Calu3 (cell line): ENCODE measurements at regions of chr4 and their contacts with region 1.

Region 1: DNA sequence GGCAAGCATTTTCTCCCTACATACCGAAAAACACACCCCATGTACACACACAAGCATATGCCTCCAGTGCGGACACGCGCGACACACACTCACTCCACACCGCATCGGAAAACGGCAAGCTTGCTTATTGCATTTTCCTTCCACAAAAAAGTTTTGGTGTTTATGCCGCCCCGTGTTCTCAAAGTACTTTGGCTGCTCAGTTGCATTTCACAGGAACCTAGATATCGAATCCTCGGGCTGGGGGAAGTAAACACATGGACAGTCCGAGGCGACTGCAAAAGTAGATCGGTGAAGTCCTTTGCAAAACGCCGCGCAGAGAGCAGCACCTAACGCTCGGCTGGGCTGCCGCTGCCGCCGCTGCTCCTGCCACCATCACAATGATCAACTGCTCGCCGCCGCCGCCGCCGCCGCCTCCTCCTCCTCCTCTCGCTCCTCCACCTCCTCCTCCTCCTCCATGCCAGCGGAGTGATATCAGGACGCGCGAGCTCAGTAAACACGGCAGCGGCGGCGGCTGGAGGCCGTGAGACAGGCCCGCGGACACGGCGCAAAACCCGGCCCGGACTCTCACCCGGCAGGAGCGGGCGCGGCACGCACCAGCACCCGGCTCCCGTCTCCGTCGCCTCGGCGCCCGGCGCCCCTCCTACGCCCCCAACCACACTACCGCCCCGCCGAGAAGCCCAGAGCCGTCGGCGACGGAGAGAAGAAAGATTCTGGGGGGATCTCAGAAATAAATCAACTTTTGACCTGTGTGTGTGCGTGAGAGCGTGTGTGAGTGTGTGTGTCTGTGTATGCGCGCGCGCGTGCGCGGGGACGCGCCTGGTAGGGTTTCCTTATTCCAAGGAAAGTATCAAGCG is at the start of gene MAML3:
- DNase-seq: peak; percentile 90
- H3K4me3 Mint-ChIP-seq: peak within 1 kb of the TSS; percentile 90
- H3K27ac Mint-ChIP-seq: peak within 1 kb of the TSS; percentile 73
- H3K4me1 Mint-ChIP-seq: no peaks in the 10 kb centered on the region
- H3K27me3 Mint-ChIP-seq: no peaks in the 10 kb centered on the region
- CTCF ChIP-seq: no peak
- total RNA-seq, gene MAML3: 3.8 and 4.0 TPM in 2 replicates

Region 2: DNA sequence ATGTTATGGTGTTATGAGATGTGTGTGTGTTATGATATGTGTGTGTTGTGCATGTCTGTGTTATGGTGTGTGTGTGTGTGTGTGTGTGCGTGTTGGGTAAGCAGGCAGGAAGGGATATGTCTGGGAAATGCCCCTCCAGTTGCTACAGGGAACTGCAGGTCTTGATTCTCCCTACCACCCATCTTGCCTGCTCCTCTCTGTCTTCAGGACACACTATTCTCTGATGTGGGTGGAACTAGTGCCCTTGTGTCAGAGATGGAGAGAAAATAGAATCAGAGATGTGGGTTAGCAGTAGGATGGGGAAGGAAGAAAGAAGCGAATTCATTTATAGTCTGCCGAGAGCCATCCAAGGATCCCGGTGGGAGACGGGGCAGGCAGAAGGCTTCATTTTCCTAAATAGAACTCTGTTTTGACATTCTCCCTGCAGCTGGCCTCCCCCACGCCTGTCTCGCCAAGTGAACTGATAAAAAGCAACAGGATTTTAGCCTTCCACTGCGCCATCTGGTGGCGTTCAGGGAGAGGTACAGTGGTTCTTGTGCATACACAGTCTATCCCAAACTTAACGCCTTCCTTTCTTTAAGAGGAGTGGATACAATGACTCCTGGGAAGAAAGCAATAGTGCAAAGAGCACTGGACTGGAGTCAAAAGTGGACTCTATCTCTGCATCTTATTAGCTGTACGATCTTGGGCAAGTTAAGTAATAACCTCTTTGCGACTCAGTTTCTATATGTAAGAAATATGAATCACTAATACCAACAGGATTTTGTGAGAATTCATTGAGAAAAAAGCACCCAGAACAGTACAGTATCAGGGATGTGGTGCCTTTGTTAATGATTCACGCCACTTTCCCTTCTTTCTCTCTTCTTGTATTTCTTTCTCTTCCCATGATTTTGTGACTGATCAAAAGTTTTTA is 502.4 kb before region 1 on chr4:
- CTCF ChIA-PET with region 1: no interaction called
- intact Hi-C with region 1: no loop called
- DNase-seq: peak; percentile 56
- H3K4me3 Mint-ChIP-seq: no peak overlapping the region
- H3K27ac Mint-ChIP-seq: no peak overlapping the region
- H3K4me1 Mint-ChIP-seq: peaks cover 35% of the 10 kb centered on the region
- H3K27me3 Mint-ChIP-seq: no peaks in the 10 kb centered on the region
- CTCF ChIP-seq: peak; percentile 68

Region 3: DNA sequence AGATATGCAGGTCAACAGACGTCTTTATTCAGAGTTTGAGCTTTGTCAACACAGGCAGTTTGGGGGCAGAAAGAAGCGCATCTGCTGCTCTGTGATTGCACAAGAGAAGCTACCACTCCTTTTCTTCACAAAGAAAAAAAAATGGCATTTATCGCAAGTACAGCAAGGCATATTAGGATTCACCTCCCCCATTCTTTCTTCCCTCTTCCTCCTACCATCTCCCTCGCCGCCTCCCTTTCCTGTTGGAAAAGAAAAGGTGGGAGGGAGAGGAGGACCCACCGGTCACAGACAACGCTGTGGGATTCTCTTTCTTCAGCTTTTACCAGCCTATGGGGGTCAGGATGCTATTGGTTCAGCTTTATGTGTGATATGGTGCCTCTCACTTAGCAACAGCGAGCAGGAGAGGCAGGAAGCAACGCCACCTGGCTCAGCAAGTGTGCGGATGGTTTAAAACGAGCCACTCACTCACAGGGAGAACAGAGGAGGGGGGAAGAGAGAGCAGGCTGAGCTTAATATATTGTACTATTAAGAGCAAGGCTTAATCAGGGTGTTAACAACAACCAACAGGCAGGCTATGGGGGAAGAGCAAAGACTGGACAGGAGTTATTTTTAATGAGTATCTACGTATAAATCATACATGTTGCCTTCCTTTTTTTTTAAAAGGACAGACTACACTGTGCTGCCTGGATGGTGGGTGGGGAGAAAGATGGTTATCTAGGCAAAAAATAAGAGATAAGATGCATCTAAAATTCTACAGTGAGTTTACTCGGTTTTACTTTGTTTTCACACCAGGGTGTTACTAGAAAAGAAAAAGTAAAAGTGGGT is 104.7 kb before region 1 on chr4:
- CTCF ChIA-PET with region 1: interaction called, 7 read pairs
- intact Hi-C with region 1: loop called (anchors 2 kb)
- DNase-seq: peak; percentile 26
- H3K4me3 Mint-ChIP-seq: peak overlapping the region; percentile 65
- H3K27ac Mint-ChIP-seq: peak overlapping the region; percentile 78
- H3K4me1 Mint-ChIP-seq: peaks cover 35% of the 10 kb centered on the region
- H3K27me3 Mint-ChIP-seq: no peaks in the 10 kb centered on the region
- CTCF ChIP-seq: no peak

Region 4: GRCh38 chr4:140095694-140096482 is 58.1 kb before region 1 on chr4:
- CTCF ChIA-PET with region 1: interaction called, 4 read pairs
- intact Hi-C with region 1: loop called (anchors 5 kb)
- DNase-seq: no peak
- H3K4me3 Mint-ChIP-seq: no peak overlapping the region
- H3K27ac Mint-ChIP-seq: peak overlapping the region; percentile 26
- H3K4me1 Mint-ChIP-seq: peaks cover 57% of the 10 kb centered on the region
- H3K27me3 Mint-ChIP-seq: no peaks in the 10 kb centered on the region
- CTCF ChIP-seq: no peak

Region 5: GRCh38 chr4:140141210-140141835 is 12.6 kb before region 1 on chr4:
- CTCF ChIA-PET with region 1: interaction called, 10 read pairs
- intact Hi-C with region 1: no loop called
- DNase-seq: no peak
- H3K4me3 Mint-ChIP-seq: no peak overlapping the region
- H3K27ac Mint-ChIP-seq: peak overlapping the region; percentile 50
- H3K4me1 Mint-ChIP-seq: peaks cover 38% of the 10 kb centered on the region
- H3K27me3 Mint-ChIP-seq: no peaks in the 10 kb centered on the region
- CTCF ChIP-seq: no peak

Region 6: GRCh38 chr4:140252742-140253555 is 99.0 kb after region 1 on chr4:
- CTCF ChIA-PET with region 1: no interaction called
- intact Hi-C with region 1: loop called (anchors 2 kb)
- DNase-seq: peak; percentile 76
- H3K4me3 Mint-ChIP-seq: peak overlapping the region; percentile 45
- H3K27ac Mint-ChIP-seq: peak overlapping the region; percentile 11
- H3K4me1 Mint-ChIP-seq: peaks cover 29% of the 10 kb centered on the region
- H3K27me3 Mint-ChIP-seq: no peaks in the 10 kb centered on the region
- CTCF ChIP-seq: peak; percentile 87

Region 7: DNA sequence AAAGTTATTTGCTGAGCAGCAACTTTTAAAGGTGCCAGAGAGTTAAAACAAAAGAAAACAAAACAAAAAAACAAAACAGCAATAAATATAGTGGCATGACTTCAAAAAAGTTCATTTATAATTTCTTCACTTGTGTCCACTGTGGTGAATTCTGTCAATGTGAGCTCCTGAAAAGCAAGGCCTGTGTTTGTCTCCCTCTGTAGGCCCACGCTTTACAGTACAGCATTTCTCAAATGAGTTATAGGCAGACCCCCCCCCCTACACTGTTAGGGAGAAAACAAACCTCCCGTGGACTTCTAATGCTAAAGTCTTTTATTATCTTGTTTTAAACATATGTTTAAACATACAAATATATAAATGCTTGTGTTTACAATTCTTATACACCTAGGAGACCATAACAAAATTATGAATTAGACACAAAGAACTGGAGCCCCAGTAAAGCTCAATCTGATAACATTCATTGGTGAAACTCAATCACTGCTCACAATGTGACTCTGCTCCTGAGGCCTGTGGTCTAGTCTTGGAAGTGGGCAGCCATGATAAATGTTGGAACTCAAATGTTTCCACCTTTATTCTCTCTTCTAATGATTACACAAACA is 172.5 kb after region 1 on chr4:
- CTCF ChIA-PET with region 1: no interaction called
- intact Hi-C with region 1: loop called (anchors 10 kb)
- DNase-seq: peak; percentile 14
- H3K4me3 Mint-ChIP-seq: no peak overlapping the region
- H3K27ac Mint-ChIP-seq: no peak overlapping the region
- H3K4me1 Mint-ChIP-seq: peaks cover 5% of the 10 kb centered on the region
- H3K27me3 Mint-ChIP-seq: no peaks in the 10 kb centered on the region
- CTCF ChIP-seq: peak; percentile 32